ENCODE measurements at regions of chr12 and their contacts with region 1.

Region 1: DNA sequence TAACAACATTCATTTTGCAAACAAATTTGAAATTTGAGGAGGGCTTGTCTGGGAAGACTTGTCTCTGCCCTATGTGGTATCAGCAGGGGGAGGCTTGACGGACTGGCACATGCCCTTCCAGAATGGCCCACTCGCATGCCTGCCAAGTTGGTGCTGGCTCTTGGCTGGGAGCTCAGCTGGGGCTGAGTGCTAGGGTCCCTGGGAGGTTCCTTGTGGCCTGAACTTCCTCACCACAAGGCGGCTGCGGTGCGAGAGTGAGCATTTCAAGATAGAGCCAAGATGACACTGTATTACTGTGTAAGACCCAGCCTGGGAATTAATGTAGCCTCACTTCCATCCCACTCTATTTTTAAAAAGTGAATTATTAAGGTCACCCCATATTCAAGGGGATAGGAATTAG is 271.6 kb upstream of the PLEKHG7 start:
- H3K4me3 Mint-ChIP-seq: no peak overlapping the region
- H3K27ac Mint-ChIP-seq: no peak overlapping the region
- H3K4me1 Mint-ChIP-seq: peaks cover 25% of the 10 kb centered on the region
- H3K27me3 Mint-ChIP-seq: peaks cover 1% of the 10 kb centered on the region

Region 2: DNA sequence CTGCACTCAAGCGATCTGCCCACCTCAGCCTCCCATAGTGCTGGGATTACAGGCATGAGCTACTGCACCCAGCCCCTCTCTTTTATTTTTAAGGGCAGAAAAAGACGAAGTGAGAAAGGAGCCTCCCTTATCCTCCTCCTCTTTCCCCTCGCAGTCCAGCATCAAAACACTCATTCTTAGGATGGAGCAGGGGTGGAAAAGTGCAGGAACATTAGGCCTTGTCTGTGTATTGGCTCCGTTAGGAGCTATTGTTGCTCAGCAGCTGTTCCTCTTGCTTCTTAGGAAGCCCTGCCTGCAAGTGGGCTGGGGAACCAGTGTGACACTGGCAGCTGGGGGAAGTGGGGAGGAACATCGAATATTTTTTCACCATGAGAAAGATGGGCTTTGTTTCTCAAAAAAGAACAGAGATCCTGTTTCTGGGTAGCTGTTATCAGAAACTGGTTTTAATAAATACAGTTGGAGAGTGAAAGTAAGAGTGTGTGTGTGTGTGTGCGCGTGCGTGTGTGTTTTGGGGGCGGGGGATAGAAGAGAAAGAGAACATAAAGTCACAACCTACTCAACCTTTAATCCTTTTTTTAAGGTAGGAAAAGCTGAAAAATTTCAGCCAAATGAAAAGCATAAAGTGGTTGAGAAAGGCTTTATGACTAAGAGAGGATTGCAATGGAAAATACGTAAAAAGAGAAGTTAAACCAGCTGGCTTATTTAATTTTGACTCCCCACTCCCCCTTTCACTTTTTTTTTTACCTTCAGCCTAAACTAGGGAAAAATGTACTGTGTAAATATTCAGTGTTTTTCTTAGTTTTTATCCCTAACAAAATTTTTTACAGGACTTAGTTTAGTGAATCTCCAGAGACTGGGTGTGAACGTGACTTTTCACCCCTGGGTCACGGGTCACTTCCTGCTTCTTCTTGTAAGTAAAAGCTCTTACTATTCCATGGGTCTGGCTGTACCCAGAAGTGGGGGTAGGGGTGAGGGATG is 74.4 kb after region 1 on chr12:
- intact Hi-C with region 1: loop called (anchors 10 kb)
- H3K4me3 Mint-ChIP-seq: peak overlapping the region; percentile 59
- H3K27ac Mint-ChIP-seq: peak overlapping the region; percentile 95
- H3K4me1 Mint-ChIP-seq: peaks cover 55% of the 10 kb centered on the region
- H3K27me3 Mint-ChIP-seq: no peaks in the 10 kb centered on the region